ENCODE measurements at regions of chr7 and their contacts with region 1.

Region 1: GRCh38 chr7:27576360-27576944 is 86.2 kb downstream of the HIBADH start:
- DNase-seq: no peak
- ATAC-seq: peak in 1 of 2 donors; percentile 62
- H3K4me3 ChIP-seq: no peak overlapping the region
- H3K27ac ChIP-seq: no peak overlapping the region
- H3K4me1 ChIP-seq: no peaks in the 10 kb centered on the region
- H3K27me3 ChIP-seq: no peaks in the 10 kb centered on the region
- CTCF ChIP-seq: peak; percentile 37 to 64 (median 57)
- POLR2A ChIP-seq: no peak

Region 2: GRCh38 chr7:27554826-27555225 is 21.6 kb before region 1 on chr7:
- in situ Hi-C with region 1: no loop called
- intact Hi-C with region 1: loop called (anchors 1 kb)
- DNase-seq: no peak
- ATAC-seq: no peak
- H3K4me3 ChIP-seq: no peak overlapping the region
- H3K27ac ChIP-seq: no peak overlapping the region
- H3K4me1 ChIP-seq: no peaks in the 10 kb centered on the region
- H3K27me3 ChIP-seq: no peaks in the 10 kb centered on the region
- CTCF ChIP-seq: no peak
- POLR2A ChIP-seq: no peak

Region 3: DNA sequence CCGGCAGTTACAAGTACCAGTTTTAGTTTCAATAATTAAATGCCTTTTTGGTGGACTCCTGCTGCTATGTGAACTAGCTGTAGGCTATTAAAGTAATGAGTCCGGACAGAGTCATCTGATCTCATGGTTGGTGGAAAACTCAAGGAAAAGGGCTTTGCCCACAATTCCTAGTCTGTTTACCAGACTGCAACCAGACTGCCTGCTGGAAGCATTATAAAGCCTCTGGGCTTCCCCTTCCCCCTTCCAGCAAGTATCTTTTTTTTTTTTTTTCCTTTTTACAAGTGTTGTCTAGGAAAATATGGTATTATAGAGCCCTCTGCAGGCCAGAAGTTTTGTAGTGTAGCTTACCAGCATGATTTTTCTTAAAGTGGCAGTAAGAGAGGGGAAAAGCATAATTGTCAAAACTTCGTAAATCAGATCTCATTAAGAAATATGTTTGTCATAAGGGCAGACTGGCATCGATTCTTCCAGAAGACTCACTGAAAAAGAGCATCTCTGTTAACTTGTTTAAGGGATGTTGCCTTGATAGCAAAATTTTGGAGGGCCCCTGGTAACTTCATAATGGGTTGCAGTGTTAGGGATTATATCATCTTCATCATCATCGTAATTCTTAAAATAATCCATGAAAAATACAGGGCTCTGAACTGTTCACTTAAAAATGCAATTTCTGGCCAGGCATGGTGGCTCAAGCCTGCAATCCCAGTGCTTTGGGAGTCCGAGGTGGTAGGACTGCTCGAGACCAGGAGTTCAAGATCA is 344.8 kb after region 1 on chr7:
- in situ Hi-C with region 1: no loop called
- intact Hi-C with region 1: loop called (anchors 10 kb)
- DNase-seq: no peak
- ATAC-seq: peak; percentile 65 to 83
- H3K4me3 ChIP-seq: peak overlapping the region in 1 of 4 donors; percentile 31
- H3K27ac ChIP-seq: no peak overlapping the region
- H3K4me1 ChIP-seq: peaks cover 4 to 10% of the 10 kb centered on the region in 2 donors
- H3K27me3 ChIP-seq: no peaks in the 10 kb centered on the region
- CTCF ChIP-seq: peak in 4 of 5 experiments; percentile 16 to 48 (median 36)
- POLR2A ChIP-seq: no peak